ENCODE measurements at regions of chr10 and their contacts with region 1.

Region 1: DNA sequence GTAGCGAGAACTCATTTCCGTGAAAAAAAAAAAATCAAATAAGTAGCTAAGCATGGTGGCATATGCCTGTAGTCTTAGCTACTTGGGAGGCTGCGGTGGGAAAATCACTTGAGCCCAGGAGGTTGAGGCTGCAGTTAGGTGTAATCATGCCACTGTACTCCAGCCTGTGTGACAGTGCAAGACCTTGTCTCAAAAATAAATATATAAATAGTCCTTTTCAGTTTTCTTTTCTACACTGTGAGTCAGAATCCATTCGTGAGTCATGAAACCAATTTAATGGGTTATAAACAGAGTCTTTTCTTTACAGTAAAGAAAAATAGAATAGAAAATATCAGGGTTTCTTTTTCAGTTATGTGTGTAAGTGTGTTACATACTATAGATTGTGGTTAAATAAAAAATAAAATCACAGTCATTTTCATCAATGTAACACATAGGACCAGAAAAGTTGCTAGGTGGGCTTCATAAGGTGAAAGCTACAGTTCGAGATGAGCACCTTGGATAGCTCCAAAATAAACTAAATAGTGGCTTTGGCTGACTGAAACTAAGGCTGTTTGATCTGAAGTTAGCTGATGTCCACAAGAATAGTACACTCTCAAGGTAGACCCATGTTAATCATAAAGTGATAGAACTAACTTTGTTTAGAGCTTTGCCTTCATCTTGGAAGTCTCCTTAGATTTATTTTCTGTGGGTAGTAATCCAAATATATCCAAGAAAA is 781.1 kb downstream of the GATA3 start:
- DNase-seq: no peak
- H3K4me3 Mint-ChIP-seq: no peak overlapping the region
- H3K27ac Mint-ChIP-seq: no peak overlapping the region
- H3K4me1 Mint-ChIP-seq: peaks cover 36% of the 10 kb centered on the region
- H3K27me3 Mint-ChIP-seq: no peaks in the 10 kb centered on the region

Region 2: DNA sequence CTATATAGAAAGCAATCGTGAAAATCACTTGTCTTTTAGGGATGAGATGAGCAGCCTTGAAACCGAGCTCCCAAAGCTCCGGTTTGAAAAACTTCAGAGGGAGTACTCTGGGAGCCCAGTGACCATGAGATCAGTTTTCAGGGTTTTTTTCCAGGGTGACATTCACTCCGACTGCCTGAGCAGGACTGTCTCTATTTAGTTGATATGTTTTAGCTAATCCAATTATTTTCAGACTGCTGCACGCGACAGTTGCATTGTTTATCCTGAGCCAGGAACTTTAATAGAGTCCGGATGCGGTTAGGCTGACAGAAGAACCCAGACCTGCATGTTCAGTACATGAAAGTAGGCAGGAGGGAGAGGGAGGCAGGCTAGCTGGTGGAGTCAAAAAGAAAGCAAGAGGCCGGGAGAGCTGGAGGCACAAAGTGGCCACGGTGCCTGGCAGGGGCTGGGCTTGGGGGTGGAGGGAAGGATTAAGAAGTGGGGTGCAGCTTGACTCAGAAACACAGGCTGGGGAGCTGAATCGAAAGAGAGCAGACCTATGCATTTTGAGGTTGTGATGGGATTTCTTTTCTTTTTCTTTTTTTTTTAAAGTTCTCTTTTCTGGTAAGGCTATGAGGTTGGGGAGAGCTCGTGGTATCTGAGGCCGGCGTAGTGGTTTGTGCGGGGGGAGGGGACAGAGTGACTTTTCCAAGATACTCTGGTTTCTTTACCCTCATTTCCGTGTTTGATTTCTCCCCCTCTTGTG is 775.5 kb before region 1 on chr10:
- intact Hi-C with region 1: loop called (anchors 5 kb)
- DNase-seq: peak; percentile 81
- H3K4me3 Mint-ChIP-seq: peak overlapping the region; percentile 92
- H3K27ac Mint-ChIP-seq: peak overlapping the region; percentile 94
- H3K4me1 Mint-ChIP-seq: peaks cover 50% of the 10 kb centered on the region
- H3K27me3 Mint-ChIP-seq: no peaks in the 10 kb centered on the region

Region 3: DNA sequence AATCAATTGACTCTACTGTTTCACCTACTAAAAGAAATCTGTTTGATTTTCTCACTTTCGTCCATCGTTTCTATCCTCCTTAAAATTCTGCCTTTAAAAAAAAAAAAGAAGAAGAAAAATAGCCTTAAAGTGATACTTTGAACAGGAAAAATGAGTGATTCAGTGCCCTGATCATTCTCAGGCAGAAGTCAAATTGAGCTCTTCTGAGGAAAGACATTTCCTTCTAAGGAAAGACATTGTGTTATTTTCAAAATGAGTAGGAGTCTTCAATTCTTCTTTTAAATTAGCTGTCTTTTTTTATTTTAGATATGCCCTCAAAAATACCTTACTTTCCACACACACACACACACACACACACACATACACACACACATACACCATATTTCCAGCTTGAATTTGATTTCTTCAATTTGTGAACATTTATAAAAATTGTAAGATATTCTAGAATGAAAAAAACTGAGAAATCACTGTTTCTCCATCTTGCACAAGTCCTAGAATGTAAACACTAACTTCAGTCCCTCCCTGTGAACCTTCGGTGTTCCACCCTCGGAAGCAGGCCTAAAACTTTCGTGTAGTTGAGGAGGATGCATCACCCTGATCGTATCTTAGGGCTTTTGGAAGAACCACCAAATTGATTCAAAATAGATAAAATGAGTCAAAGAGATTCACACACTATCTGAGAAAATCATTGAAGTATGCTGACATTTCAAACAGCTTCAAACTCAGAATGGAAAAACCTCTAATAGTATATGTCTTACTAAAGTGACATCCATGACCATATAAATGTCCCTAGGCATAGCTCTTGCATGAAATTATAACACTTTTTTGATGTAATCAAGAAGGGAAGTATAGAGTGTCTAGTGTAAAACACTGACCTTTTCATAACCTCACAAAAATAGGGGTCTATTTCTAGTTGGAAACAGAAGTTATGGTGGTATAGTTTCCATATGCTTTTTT is 510.3 kb before region 1 on chr10:
- intact Hi-C with region 1: loop called (anchors 2 kb)
- DNase-seq: peak; percentile 42
- H3K4me3 Mint-ChIP-seq: peak overlapping the region; percentile 40
- H3K27ac Mint-ChIP-seq: peak overlapping the region; percentile 93
- H3K4me1 Mint-ChIP-seq: peaks cover 78% of the 10 kb centered on the region
- H3K27me3 Mint-ChIP-seq: no peaks in the 10 kb centered on the region

Region 4: GRCh38 chr10:8577686-8578085 is 257.9 kb before region 1 on chr10:
- intact Hi-C with region 1: loop called (anchors 5 kb)
- DNase-seq: no peak
- H3K4me3 Mint-ChIP-seq: no peak overlapping the region
- H3K27ac Mint-ChIP-seq: peak overlapping the region; percentile 89
- H3K4me1 Mint-ChIP-seq: peaks cover 69% of the 10 kb centered on the region
- H3K27me3 Mint-ChIP-seq: no peaks in the 10 kb centered on the region

Region 5: GRCh38 chr10:8800428-8800827 is 35.2 kb before region 1 on chr10:
- intact Hi-C with region 1: loop called (anchors 1 kb)
- DNase-seq: no peak
- H3K4me3 Mint-ChIP-seq: no peak overlapping the region
- H3K27ac Mint-ChIP-seq: peak overlapping the region; percentile 40
- H3K4me1 Mint-ChIP-seq: peaks cover 16% of the 10 kb centered on the region
- H3K27me3 Mint-ChIP-seq: no peaks in the 10 kb centered on the region

Region 6: DNA sequence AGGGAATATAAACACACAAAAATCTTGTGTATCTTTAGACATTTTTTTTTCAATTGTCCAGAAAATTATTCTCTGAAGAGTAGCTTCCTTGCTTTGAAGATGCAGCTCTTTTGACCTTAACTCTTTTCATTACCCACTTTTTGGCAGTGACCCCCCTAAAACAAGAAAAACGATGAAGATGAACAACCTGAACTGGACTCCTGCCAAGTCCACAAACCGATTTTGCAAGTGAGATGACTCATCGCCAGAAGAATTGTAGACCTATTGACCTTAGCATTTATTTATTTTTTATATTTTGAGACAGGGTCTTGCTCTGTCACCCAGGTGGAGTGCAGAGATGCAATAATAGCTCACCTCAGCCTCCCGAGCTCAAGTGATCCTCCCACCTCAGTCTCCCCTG is 78.1 kb after region 1 on chr10:
- intact Hi-C with region 1: no loop called
- DNase-seq: no peak
- H3K4me3 Mint-ChIP-seq: no peak overlapping the region
- H3K27ac Mint-ChIP-seq: no peak overlapping the region
- H3K4me1 Mint-ChIP-seq: peaks cover 17% of the 10 kb centered on the region
- H3K27me3 Mint-ChIP-seq: no peaks in the 10 kb centered on the region

Region 7: DNA sequence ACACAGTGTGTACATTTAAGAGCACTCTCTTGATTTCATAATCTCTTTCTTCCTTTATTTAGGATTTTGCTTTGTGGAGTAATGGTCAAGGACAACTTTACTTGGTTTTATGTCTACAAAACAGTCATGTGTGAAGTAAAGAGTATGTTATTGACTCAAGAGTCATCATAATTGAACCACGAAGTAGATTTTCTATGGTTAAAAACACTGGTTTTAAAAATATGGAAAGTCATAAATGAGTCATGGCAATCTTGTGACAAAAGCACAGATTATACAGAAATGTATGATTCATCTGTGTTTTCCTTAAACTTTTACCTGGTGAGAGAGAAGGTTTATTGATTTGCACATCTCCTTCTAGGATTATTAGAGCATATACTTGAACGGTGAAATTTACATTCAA is 188.6 kb after region 1 on chr10:
- intact Hi-C with region 1: loop called (anchors 1 kb)
- DNase-seq: no peak
- H3K4me3 Mint-ChIP-seq: no peak overlapping the region
- H3K27ac Mint-ChIP-seq: peak overlapping the region; percentile 88
- H3K4me1 Mint-ChIP-seq: peaks cover 74% of the 10 kb centered on the region
- H3K27me3 Mint-ChIP-seq: no peaks in the 10 kb centered on the region

Region 8: GRCh38 chr10:9294865-9295264 is 459.3 kb after region 1 on chr10:
- intact Hi-C with region 1: loop called (anchors 2 kb)
- DNase-seq: no peak
- H3K4me3 Mint-ChIP-seq: no peak overlapping the region
- H3K27ac Mint-ChIP-seq: peak overlapping the region; percentile 71
- H3K4me1 Mint-ChIP-seq: peaks cover 27% of the 10 kb centered on the region
- H3K27me3 Mint-ChIP-seq: peaks cover 2% of the 10 kb centered on the region

Measured in activated T-helper 2 cell treated with anti-CD3 and anti-CD28 coated beads, Interferon-gamma antibody, Interleukin-2, Interleukin-4, amounts not matched to agents 10 μg/mL and 5 μg/mL and 100 μg/mL, durations not matched to agents 14 hours and 24 hours and 36 hours (primary cell).